Gastrocnemius medialis (tissue), 4 donors: ENCODE measurements at regions of chr4 and their contacts with region 1.

Region 1: GRCh38 chr4:107719922-107720722 is at the start of gene PAPSS1:
- DNase-seq: peak; percentile 95 to 97
- ATAC-seq: peak; percentile 98 to 99
- H3K4me3 ChIP-seq: peak within 1 kb of the TSS; percentile 90 to 99 (median 95)
- H3K27ac ChIP-seq: peak within 1 kb of the TSS; percentile 85 to 94 (median 94)
- H3K4me1 ChIP-seq: peaks cover 4 to 16% of the 10 kb centered on the region in 2 donors
- H3K27me3 ChIP-seq: no peaks in the 10 kb centered on the region
- CTCF ChIP-seq: no peak
- POLR2A ChIP-seq: peak; percentile 63 to 79
- total RNA-seq, gene PAPSS1: 3.7 to 7.0 (median 5.9) TPM

Region 2: GRCh38 chr4:106315968-106316772 is 1404.0 kb before region 1 on chr4 and contains the starts of genes AIMP1 and TBCK:
- in situ Hi-C with region 1: no loop called
- intact Hi-C with region 1: loop called (anchors 5 kb)
- DNase-seq: peak; percentile 86 to 87
- ATAC-seq: peak; percentile 96 to 97
- H3K4me3 ChIP-seq: peak within 1 kb of the TSS; percentile 89 to 94 (median 91)
- H3K27ac ChIP-seq: peak within 1 kb of the TSS; percentile 89 to 97 (median 96)
- H3K4me1 ChIP-seq: peaks cover 30 to 38% of the 10 kb centered on the region in 2 donors
- H3K27me3 ChIP-seq: no peaks in the 10 kb centered on the region
- CTCF ChIP-seq: no peak
- POLR2A ChIP-seq: peak; percentile 62 to 76
- total RNA-seq, gene AIMP1: 23.2 to 30.0 (median 27.4) TPM
- total RNA-seq, gene TBCK: 8.1 to 17.7 (median 12.2) TPM

Region 3: DNA sequence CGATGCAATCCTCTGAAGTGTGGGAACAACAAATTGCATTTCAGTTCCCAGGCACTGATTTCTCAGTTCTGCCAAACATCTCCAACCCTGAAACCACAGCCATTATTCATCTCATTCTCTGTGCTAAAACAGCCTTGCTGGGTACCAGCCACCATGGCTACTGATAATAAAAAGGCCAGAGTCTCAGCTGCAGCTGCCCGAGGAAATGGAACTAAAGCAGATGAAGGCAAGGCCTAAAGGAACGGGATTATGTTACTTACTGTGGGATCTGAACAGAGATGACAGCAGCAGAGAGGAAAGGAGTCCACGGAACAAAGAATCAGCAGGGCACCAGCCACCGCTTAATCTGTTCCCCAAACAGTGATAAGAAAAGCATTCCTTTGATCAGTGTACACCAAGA is 155.8 kb before region 1 on chr4:
- in situ Hi-C with region 1: no loop called
- intact Hi-C with region 1: no loop called
- DNase-seq: no peak
- ATAC-seq: no peak
- H3K4me3 ChIP-seq: no peak overlapping the region
- H3K27ac ChIP-seq: no peak overlapping the region
- H3K4me1 ChIP-seq: no peaks in the 10 kb centered on the region
- H3K27me3 ChIP-seq: no peaks in the 10 kb centered on the region
- CTCF ChIP-seq: no peak
- POLR2A ChIP-seq: no peak

Region 4: DNA sequence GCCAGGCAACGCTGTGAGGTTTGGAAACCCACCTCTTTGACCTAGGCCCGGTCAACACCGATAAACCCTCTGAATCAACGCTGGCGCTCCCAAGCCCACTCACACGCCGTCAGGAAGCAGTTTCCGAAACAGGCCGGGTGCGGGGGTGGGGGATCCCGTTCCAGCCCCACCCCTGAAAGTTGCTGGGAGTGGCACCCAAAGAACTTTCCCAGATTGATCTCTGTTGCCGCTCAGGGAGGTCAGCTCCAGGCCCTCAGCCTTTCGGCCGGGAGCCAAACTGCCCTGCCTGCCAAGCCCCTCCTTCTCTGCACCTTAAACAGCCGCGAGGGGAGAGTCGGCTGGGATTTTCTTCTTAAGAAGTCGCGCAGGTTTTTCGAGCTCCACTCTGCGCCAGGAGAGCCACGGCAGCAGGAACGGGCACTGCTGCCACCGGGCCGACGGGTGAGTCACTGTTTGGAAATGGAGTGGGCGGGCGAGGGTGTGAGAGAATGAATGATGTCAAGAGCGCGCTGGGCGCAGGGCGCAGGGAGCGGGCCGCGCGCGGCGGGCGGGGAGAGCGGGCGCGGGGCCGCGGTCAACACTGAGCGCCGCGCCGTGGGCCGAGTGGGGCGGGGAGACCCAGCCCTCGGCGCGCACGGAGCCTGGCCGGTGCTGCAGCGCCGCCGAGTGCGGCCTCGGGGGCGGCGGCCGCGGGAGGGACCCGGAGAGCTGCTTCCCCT is 104.4 kb after region 1 on chr4 and contains the start of gene SGMS2:
- in situ Hi-C with region 1: no loop called
- intact Hi-C with region 1: loop called (anchors 1 kb)
- DNase-seq: peak; percentile 72 to 84
- ATAC-seq: peak; percentile 90 to 91
- H3K4me3 ChIP-seq: peak within 1 kb of the TSS; percentile 73 to 87 (median 84)
- H3K27ac ChIP-seq: peak within 1 kb of the TSS; percentile 91 to 94 (median 93)
- H3K4me1 ChIP-seq: peaks cover 17 to 22% of the 10 kb centered on the region in 2 donors
- H3K27me3 ChIP-seq: no peaks in the 10 kb centered on the region
- CTCF ChIP-seq: no peak
- POLR2A ChIP-seq: peak; percentile 71 to 73
- total RNA-seq, gene SGMS2: 10.2 to 79.1 (median 23.8) TPM

Region 5: GRCh38 chr4:107989537-107990386 is 269.6 kb after region 1 on chr4 and contains the start of gene HADH:
- in situ Hi-C with region 1: no loop called
- intact Hi-C with region 1: loop called (anchors 5 kb)
- DNase-seq: peak; percentile 92 to 96
- ATAC-seq: peak; percentile 86 to 87
- H3K4me3 ChIP-seq: peak within 1 kb of the TSS; percentile 76 to 91 (median 90)
- H3K27ac ChIP-seq: peak within 1 kb of the TSS; percentile 92 to 99 (median 96)
- H3K4me1 ChIP-seq: peaks cover 38 to 47% of the 10 kb centered on the region in 2 donors
- H3K27me3 ChIP-seq: no peaks in the 10 kb centered on the region
- CTCF ChIP-seq: no peak
- POLR2A ChIP-seq: peak; percentile 99
- total RNA-seq, gene HADH: 78.0 to 137 (median 105) TPM

Region 6: DNA sequence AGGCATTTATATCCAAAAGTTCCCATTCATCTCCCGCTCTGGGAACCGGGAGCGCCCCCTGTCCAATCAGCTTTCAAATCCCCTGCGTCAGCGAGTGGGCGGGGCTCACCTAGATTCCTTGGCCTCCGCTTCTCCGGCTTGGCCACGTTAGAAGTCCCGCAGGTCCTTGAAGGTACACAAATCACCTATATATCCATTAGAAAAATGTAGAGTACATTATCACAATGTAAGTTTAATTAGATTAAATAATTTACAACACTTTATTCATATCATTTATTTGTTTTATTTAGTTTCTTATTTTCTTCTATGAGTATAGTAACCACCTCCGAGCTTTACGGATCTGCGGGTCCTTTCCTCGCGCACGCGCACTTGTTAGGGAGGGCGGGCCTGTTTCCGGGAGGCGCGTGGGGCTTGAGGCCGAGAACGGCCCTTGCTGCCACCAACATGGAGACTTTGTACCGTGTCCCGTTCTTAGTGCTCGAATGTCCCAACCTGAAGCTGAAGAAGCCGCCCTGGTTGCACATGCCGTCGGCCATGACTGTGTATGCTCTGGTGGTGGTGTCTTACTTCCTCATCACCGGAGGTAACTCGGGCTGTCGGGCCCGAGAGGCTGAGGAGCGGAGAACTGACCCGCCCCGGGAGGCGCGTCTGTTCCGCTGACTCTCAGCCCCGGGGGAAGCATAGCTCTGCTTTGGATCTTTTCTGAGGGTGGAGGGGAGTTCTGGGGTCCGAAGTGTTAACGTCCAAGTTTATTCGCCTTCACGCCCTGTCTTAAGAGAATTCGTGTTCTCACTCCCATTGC is 930.3 kb after region 1 on chr4 and contains the start of gene OSTC:
- in situ Hi-C with region 1: loop called in 1 of 4 experiments (anchors 25 kb)
- intact Hi-C with region 1: no loop called
- DNase-seq: peak; percentile 87 to 91
- ATAC-seq: peak; percentile 99
- H3K4me3 ChIP-seq: peak within 1 kb of the TSS; percentile 73 to 95 (median 90)
- H3K27ac ChIP-seq: peak within 1 kb of the TSS; percentile 87 to 90 (median 88)
- H3K4me1 ChIP-seq: peaks cover 14 to 21% of the 10 kb centered on the region in 2 donors
- H3K27me3 ChIP-seq: no peaks in the 10 kb centered on the region
- CTCF ChIP-seq: peak in 1 of 5 experiments; percentile 20
- POLR2A ChIP-seq: peak; percentile 15 to 61
- total RNA-seq, gene OSTC: 15.5 to 25.0 (median 23.2) TPM